ENCODE measurements at regions of chr6 and their contacts with region 1.

Region 1: DNA sequence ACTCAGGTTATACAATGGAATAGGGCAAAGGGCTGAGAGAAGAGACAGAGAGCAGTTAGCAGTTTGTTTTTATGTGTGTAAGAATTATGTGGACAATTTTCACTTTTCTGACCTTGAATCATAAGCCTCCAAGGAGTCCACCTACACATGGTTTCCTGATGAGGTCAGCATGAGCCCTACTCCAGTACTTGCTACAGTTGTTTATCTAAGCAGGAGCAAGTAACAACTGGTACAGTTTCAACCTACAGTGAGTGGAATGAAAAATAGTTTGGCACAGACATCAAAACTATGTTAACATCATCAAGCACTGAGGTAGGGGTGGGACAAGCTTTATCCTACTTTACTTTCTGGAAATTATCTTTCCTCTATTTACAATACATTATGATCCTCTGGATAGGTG is 426.7 kb upstream of the ID4 start:
- DNase-seq: peak; percentile 83
- ATAC-seq: peak; percentile 86
- H3K4me3 ChIP-seq: no peak overlapping the region
- H3K27ac ChIP-seq: no peak overlapping the region
- H3K4me1 ChIP-seq: peaks cover 44% of the 10 kb centered on the region
- H3K27me3 ChIP-seq: no peaks in the 10 kb centered on the region
- CTCF ChIP-seq: 0 out of 2 replicates have a peak, but pooled peaks have one; percentile 9

Region 2: DNA sequence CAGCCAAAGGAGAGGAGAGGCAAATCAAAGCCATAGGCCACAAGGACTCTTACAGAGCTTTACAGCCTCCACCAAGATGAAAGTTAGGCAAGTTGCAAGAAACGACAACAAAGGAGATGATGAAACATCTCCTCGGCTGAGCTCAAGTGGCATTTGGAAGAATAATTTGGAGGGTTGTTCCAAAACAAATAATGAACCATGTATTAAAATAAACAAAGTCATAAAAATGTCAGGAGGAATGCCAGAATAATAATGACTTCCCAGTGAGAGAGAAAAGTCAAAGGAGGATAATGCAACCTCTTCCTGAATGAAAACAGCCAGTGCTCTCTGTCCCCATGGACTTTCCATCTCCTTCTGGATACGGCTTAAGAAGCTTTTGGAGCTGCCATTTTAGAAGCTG is 55.3 kb after region 1 on chr6:
- CTCF ChIA-PET with region 1: no interaction called
- POLR2A ChIA-PET with region 1: no interaction called
- intact Hi-C with region 1: loop called (anchors 5 kb)
- DNase-seq: peak; percentile 96
- ATAC-seq: peak; percentile 85
- H3K4me3 ChIP-seq: peak overlapping the region; percentile 52
- H3K27ac ChIP-seq: peak overlapping the region; percentile 91
- H3K4me1 ChIP-seq: peaks cover 24% of the 10 kb centered on the region
- H3K27me3 ChIP-seq: no peaks in the 10 kb centered on the region
- CTCF ChIP-seq: no peak

Region 3: DNA sequence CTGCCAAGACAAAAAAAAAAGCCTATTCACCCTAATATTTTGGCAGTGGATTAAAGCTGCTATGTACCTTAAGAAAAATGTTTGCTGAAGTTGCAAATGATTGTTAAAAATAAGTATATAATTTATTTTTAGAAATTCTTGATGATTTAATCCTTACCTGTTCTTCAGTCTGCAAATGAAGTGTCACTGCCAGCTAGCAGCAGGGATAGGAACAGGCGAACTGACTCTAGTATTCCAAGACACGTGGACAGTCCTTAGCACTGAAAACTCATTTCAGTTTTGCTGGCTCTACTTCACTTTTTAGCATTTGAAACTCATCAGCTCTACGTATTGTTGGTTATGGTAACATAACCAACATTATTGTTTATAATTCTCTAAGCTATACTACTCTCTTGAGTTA is 222.3 kb after region 1 on chr6:
- CTCF ChIA-PET with region 1: no interaction called
- POLR2A ChIA-PET with region 1: no interaction called
- intact Hi-C with region 1: no loop called
- DNase-seq: no peak
- ATAC-seq: no peak
- H3K4me3 ChIP-seq: no peak overlapping the region
- H3K27ac ChIP-seq: no peak overlapping the region
- H3K4me1 ChIP-seq: no peaks in the 10 kb centered on the region
- H3K27me3 ChIP-seq: no peaks in the 10 kb centered on the region
- CTCF ChIP-seq: no peak

Measured in PC-3 (cell line).